SK-N-SH (cell line): ENCODE measurements at regions of chr3 and their contacts with region 1.

Region 1: DNA sequence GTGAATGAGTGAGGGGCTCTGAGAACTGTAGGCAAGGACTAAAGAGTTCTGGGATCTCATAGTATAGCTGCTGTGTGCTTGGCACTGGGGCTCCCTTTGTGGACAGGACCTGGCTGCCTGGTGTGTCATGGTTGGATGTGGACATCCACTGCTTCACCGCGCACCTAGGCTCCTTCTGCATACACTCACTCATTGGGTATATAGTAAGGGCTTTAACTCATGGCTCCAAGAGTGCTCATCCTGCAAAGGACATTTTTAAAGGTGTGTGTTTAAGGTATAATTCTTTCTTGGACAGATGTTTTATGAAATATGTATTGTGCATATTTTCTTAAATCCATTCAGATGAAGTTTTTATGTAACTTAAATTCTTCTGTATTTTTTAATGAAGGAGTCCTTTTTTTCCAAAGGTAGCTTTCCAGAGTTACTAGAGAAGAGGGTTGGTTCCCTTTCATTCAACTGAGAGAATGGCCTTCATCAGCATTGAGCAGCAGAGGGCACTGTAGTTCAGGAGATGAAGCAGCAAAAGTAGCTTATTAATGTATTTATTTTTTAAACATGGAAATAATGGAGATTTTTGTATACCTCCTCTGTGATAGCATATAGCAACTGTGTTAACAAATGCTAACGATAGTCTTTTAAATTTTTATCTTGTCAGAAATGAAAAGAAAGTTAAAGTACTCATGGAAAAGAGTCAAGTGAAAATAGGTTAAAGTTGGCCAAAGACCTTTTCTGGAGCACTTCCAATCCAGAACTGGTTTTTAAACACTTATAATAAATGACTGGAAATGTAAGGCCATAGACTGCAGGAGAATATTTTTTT is 25.2 kb downstream of the OXNAD1 start:
- DNase-seq: peak; percentile 30
- H3K4me3 ChIP-seq: peak overlapping the region in 1 of 2 experiments; percentile 33; a peak in 1 of 4 replicates
- H3K27ac ChIP-seq: peak overlapping the region in 1 of 2 experiments; percentile 76; a peak in 2 of 4 replicates
- H3K4me1 ChIP-seq: peaks cover 0 to 11% of the 10 kb centered on the region in 2 experiments; a peak in 2 of 4 replicates
- H3K27me3 ChIP-seq: no peaks in the 10 kb centered on the region
- CTCF ChIP-seq: peak; percentile 96
- EP300 ChIP-seq: no peak
- RAD21 ChIP-seq: peak; percentile 97

Region 2: DNA sequence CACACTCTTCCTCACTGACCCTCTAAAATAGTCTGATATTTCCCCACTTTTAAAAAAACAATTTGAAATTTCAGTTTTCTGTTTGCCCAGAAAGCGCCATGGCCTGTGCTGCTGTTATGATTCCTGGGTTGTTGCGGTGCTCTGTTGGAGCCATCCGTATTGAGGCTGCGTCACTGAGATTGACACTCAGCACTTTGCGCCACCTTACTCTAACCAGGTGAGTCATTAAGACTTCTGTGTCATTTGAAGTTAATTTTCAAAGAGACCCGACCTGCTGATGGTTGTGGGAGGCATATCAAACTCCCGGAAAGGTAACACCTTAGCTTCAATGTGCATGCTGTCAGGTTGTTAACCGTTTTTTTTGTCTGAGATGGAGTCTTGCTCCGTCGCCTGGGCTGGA is 19.4 kb before region 1 on chr3:
- CTCF ChIA-PET with region 1: interaction called, 27 read pairs
- POLR2A ChIA-PET with region 1: interaction called, 3 read pairs
- DNase-seq: no peak
- H3K4me3 ChIP-seq: no peak overlapping the region
- H3K27ac ChIP-seq: no peak overlapping the region
- H3K4me1 ChIP-seq: peaks cover 5 to 11% of the 10 kb centered on the region in 2 experiments; a peak in 3 of 4 replicates
- H3K27me3 ChIP-seq: no peaks in the 10 kb centered on the region
- CTCF ChIP-seq: no peak
- EP300 ChIP-seq: no peak
- RAD21 ChIP-seq: no peak

Region 3: DNA sequence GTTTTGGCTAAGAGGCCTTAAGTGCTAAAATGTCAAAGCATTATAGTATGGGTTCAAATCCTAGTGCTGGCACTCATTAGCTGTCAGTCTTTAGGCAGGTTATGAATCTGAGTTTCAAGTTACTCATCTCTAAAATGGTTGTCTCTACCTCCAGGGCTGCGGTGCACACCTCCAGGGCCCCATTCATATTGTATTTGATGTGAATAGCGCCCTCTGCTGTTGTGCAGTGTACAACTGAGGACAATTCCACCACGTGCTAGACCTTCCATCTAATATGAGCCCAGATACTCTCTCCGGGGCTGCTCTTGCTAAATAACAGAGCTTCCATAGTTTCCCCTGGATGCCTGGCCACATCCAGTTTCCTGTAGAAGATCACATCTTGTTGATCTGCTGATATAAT is 29.1 kb after region 1 on chr3:
- CTCF ChIA-PET with region 1: interaction called, 14 read pairs
- POLR2A ChIA-PET with region 1: no interaction called
- DNase-seq: peak; percentile 34
- H3K4me3 ChIP-seq: no peak overlapping the region
- H3K27ac ChIP-seq: no peak overlapping the region; a peak in 1 of 4 replicates
- H3K4me1 ChIP-seq: peaks cover 0 to 7% of the 10 kb centered on the region in 2 experiments; a peak in 1 of 4 replicates
- H3K27me3 ChIP-seq: no peaks in the 10 kb centered on the region
- CTCF ChIP-seq: peak; percentile 65
- EP300 ChIP-seq: no peak
- RAD21 ChIP-seq: no peak

Region 4: GRCh38 chr3:16496408-16497222 is 206.4 kb after region 1 on chr3:
- CTCF ChIA-PET with region 1: interaction called, 10 read pairs
- POLR2A ChIA-PET with region 1: no interaction called
- DNase-seq: no peak
- H3K4me3 ChIP-seq: no peak overlapping the region
- H3K27ac ChIP-seq: peak overlapping the region in 1 of 2 experiments; percentile 96; a peak in 1 of 4 replicates
- H3K4me1 ChIP-seq: peaks cover 12 to 40% of the 10 kb centered on the region in 2 experiments
- H3K27me3 ChIP-seq: no peaks in the 10 kb centered on the region
- CTCF ChIP-seq: no peak
- EP300 ChIP-seq: no peak
- RAD21 ChIP-seq: no peak

Region 5: GRCh38 chr3:16516695-16517481 is 226.7 kb after region 1 on chr3:
- CTCF ChIA-PET with region 1: interaction called, 57 read pairs
- POLR2A ChIA-PET with region 1: interaction called, 16 read pairs
- DNase-seq: peak; percentile 58
- H3K4me3 ChIP-seq: no peak overlapping the region; a peak in 1 of 4 replicates
- H3K27ac ChIP-seq: peak overlapping the region in 1 of 2 experiments; percentile 100; a peak in 2 of 4 replicates
- H3K4me1 ChIP-seq: peaks cover 7 to 66% of the 10 kb centered on the region in 2 experiments; a peak in 2 of 4 replicates
- H3K27me3 ChIP-seq: no peaks in the 10 kb centered on the region
- CTCF ChIP-seq: peak; percentile 67
- EP300 ChIP-seq: peak in 1 of 2 experiments; percentile 94; a peak in 2 of 4 replicates
- RAD21 ChIP-seq: peak; percentile 85

Region 6: DNA sequence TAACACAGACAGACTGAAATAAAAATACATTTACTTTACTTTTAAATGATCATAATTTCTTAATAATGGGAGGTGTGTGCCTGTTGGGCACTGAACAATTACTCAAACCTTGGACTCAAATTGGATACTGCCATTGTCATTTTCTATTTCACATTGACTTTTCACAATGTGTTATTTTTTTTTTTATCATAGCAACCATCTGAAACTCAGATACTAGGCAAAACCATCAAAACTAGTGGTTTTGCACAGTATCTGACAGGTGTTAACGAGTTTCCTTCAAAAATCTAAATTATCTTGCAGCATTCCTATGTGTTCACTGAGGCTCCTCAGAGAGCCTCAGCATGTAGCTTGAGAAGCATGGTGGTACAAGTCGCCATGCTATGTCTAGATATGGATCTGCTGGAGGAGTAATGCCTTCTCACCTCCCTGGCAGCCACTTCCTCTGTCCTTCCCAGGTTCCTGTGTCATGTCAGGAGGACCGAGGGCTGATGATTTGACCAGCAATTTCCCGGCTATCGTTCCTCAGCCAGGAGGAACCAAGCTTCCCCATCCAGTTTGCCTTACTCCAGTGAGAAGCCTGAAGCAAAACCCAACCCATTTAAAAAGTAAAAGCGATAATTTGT is 253.1 kb after region 1 on chr3:
- CTCF ChIA-PET with region 1: interaction called, 12 read pairs
- POLR2A ChIA-PET with region 1: no interaction called
- DNase-seq: no peak
- H3K4me3 ChIP-seq: no peak overlapping the region
- H3K27ac ChIP-seq: no peak overlapping the region
- H3K4me1 ChIP-seq: peaks cover 0 to 3% of the 10 kb centered on the region in 2 experiments; a peak in 1 of 4 replicates
- H3K27me3 ChIP-seq: peaks cover 17% of the 10 kb centered on the region; the same call in 1 of the 2 replicates
- CTCF ChIP-seq: no peak
- EP300 ChIP-seq: no peak
- RAD21 ChIP-seq: no peak